GM12878 (cell line): ENCODE measurements at regions of chr6 and their contacts with region 1.

Region 1: GRCh38 chr6:16514249-16514648 is 247.0 kb downstream of the ATXN1 start:
- DNase-seq: no peak
- ATAC-seq: peak; percentile 50
- H3K4me3 ChIP-seq: no peak overlapping the region
- H3K27ac ChIP-seq: no peak overlapping the region
- H3K4me1 ChIP-seq: peaks cover 45% of the 10 kb centered on the region
- H3K27me3 ChIP-seq: no peaks in the 10 kb centered on the region
- CTCF ChIP-seq: peak; percentile 49 to 62 (median 60)
- EP300 ChIP-seq: no peak
- POLR2A ChIP-seq: no peak
- RAD21 ChIP-seq: peak; percentile 78

Region 2: DNA sequence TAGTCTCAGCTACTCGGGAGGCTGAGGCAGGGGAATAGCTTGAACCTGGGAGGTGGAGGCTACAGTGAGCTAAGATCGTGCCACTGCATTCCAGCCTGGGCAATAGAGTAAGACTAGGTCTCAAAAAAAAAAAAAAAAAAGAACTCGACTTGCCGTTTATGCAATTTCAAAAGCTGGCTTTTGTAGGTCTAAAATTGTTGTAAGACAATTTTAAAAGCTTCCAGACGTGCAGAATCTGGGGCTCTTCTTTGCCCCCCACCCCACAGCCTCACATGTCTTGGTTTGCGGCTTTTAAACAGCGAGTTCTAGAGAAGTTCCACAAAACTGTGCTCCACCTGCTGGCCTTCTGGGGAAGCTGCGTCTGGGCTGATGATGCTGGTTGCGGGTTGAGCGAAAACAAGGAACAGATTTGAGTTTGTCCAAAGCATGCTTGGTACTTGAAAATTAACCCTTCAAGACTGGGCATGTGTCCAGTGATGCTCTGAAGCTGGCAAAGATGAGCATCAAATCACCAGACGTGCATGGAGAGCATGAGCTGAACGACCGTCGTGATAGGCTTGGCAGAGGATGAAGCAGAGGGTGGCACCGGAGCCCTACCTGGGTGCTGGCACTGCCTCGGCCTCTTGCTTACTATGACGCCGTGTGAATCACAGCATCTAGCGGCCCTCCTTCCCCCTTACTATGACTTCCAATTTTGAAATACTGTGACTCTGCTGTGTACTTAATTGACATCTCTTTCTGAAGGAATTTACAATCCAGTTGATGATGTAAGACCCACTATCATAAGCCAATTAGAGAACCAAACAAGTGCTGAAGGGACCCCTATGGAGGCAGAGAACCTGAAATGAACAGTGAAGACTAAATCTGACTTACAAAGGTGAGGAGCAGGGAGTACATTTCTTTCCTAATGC is 104.5 kb before region 1 on chr6:
- CTCF ChIA-PET with region 1: interaction called, 24 read pairs
- POLR2A ChIA-PET with region 1: interaction called, 7 read pairs
- RAD21 ChIA-PET with region 1: interaction called, 16 read pairs
- SMC1A ChIA-PET with region 1: interaction called, 64 read pairs
- in situ Hi-C with region 1: no loop called
- intact Hi-C with region 1: no loop called
- DNase-seq: no peak
- ATAC-seq: peak; percentile 40
- H3K4me3 ChIP-seq: no peak overlapping the region
- H3K27ac ChIP-seq: no peak overlapping the region
- H3K4me1 ChIP-seq: peaks cover 11% of the 10 kb centered on the region
- H3K27me3 ChIP-seq: no peaks in the 10 kb centered on the region
- CTCF ChIP-seq: peak; percentile 60 to 86 (median 83)
- EP300 ChIP-seq: no peak
- POLR2A ChIP-seq: no peak
- RAD21 ChIP-seq: peak; percentile 79

Region 3: GRCh38 chr6:16481697-16482399 is 32.4 kb before region 1 on chr6:
- CTCF ChIA-PET with region 1: interaction called, 203 read pairs
- POLR2A ChIA-PET with region 1: interaction called, 14 read pairs
- RAD21 ChIA-PET with region 1: interaction called, 101 read pairs
- SMC1A ChIA-PET with region 1: interaction called, 135 read pairs
- in situ Hi-C with region 1: no loop called
- intact Hi-C with region 1: no loop called
- DNase-seq: no peak
- ATAC-seq: peak; percentile 61
- H3K4me3 ChIP-seq: peak overlapping the region; percentile 20; the same call in 1 of the 2 replicates
- H3K27ac ChIP-seq: peak overlapping the region; percentile 83
- H3K4me1 ChIP-seq: peaks cover 65% of the 10 kb centered on the region
- H3K27me3 ChIP-seq: no peaks in the 10 kb centered on the region
- CTCF ChIP-seq: no peak
- EP300 ChIP-seq: peak; percentile 68 to 77; a peak in 3 of 4 replicates
- POLR2A ChIP-seq: no peak
- RAD21 ChIP-seq: peak; percentile 3; the same call in 1 of the 2 replicates

Region 4: GRCh38 chr6:16576451-16577368 is 62.5 kb after region 1 on chr6:
- CTCF ChIA-PET with region 1: interaction called, 5 read pairs
- POLR2A ChIA-PET with region 1: interaction called, 7 read pairs
- RAD21 ChIA-PET with region 1: interaction called, 5 read pairs
- SMC1A ChIA-PET with region 1: interaction called, 35 read pairs
- in situ Hi-C with region 1: no loop called
- intact Hi-C with region 1: no loop called
- DNase-seq: peak; percentile 59
- ATAC-seq: peak; percentile 99
- H3K4me3 ChIP-seq: no peak overlapping the region
- H3K27ac ChIP-seq: no peak overlapping the region
- H3K4me1 ChIP-seq: peaks cover 4% of the 10 kb centered on the region
- H3K27me3 ChIP-seq: no peaks in the 10 kb centered on the region
- CTCF ChIP-seq: no peak
- EP300 ChIP-seq: peak in 1 of 2 experiments; percentile 41; a peak in 2 of 4 replicates
- POLR2A ChIP-seq: no peak
- RAD21 ChIP-seq: no peak

Region 5: GRCh38 chr6:16651871-16652270 is 137.6 kb after region 1 on chr6:
- CTCF ChIA-PET with region 1: interaction called, 10 read pairs
- POLR2A ChIA-PET with region 1: no interaction called
- RAD21 ChIA-PET with region 1: interaction called, 3 read pairs
- SMC1A ChIA-PET with region 1: interaction called, 4 read pairs
- in situ Hi-C with region 1: no loop called
- intact Hi-C with region 1: no loop called
- DNase-seq: no peak
- ATAC-seq: peak; percentile 86
- H3K4me3 ChIP-seq: no peak overlapping the region
- H3K27ac ChIP-seq: no peak overlapping the region
- H3K4me1 ChIP-seq: peaks cover 18% of the 10 kb centered on the region
- H3K27me3 ChIP-seq: no peaks in the 10 kb centered on the region
- CTCF ChIP-seq: no peak
- EP300 ChIP-seq: no peak
- POLR2A ChIP-seq: no peak
- RAD21 ChIP-seq: no peak

Region 6: DNA sequence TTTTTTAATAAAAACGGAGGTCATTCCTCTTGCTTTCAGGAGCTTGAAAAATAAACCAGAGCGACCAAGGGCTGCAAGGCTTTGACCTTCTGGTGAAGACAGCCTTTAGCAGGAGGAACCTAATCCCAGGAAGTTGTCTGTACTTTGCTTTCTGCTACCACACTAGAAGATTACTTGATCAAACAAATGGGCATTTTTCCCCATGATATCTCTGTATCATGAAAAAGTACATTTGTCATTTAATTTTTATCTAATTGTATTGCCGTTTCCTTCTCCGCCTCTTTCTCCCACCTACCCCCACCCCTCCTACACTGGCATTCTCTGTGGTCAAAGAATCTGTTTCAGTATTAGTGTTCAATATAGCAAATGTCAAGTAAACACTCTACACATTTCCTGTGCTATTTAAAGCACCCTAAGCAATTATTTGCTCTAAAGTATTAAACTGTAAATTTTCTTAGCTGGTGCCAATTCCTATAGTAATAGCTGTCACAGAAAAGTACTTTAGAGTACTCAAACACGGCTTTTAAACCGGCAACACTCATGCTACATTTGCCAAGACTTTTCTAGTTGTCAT is 217.3 kb after region 1 on chr6:
- CTCF ChIA-PET with region 1: interaction called, 8 read pairs
- POLR2A ChIA-PET with region 1: no interaction called
- RAD21 ChIA-PET with region 1: interaction called, 5 read pairs
- SMC1A ChIA-PET with region 1: interaction called, 10 read pairs
- in situ Hi-C with region 1: no loop called
- intact Hi-C with region 1: no loop called
- DNase-seq: peak; percentile 61
- ATAC-seq: peak; percentile 95
- H3K4me3 ChIP-seq: peak overlapping the region; percentile 59; the same call in 1 of the 2 replicates
- H3K27ac ChIP-seq: peak overlapping the region; percentile 28; the same call in 1 of the 2 replicates
- H3K4me1 ChIP-seq: peaks cover 17% of the 10 kb centered on the region
- H3K27me3 ChIP-seq: no peaks in the 10 kb centered on the region
- CTCF ChIP-seq: no peak
- EP300 ChIP-seq: peak; percentile 86 to 89
- POLR2A ChIP-seq: no peak
- RAD21 ChIP-seq: no peak